ENCODE measurements at regions of chr9 and their contacts with region 1.

Region 1: GRCh38 chr9:105694190-105694847 is at the start of gene TMEM38B:
- DNase-seq: peak; percentile 85 to 93
- ATAC-seq: peak; percentile 96
- H3K4me3 ChIP-seq: peak within 1 kb of the TSS; percentile 61 to 74
- H3K27ac ChIP-seq: peak within 1 kb of the TSS in 1 of 2 donors; percentile 52
- H3K4me1 ChIP-seq: no peaks in the 10 kb centered on the region
- H3K27me3 ChIP-seq: no peaks in the 10 kb centered on the region
- total RNA-seq, gene TMEM38B: 9.8 to 10.5 TPM

Region 2: DNA sequence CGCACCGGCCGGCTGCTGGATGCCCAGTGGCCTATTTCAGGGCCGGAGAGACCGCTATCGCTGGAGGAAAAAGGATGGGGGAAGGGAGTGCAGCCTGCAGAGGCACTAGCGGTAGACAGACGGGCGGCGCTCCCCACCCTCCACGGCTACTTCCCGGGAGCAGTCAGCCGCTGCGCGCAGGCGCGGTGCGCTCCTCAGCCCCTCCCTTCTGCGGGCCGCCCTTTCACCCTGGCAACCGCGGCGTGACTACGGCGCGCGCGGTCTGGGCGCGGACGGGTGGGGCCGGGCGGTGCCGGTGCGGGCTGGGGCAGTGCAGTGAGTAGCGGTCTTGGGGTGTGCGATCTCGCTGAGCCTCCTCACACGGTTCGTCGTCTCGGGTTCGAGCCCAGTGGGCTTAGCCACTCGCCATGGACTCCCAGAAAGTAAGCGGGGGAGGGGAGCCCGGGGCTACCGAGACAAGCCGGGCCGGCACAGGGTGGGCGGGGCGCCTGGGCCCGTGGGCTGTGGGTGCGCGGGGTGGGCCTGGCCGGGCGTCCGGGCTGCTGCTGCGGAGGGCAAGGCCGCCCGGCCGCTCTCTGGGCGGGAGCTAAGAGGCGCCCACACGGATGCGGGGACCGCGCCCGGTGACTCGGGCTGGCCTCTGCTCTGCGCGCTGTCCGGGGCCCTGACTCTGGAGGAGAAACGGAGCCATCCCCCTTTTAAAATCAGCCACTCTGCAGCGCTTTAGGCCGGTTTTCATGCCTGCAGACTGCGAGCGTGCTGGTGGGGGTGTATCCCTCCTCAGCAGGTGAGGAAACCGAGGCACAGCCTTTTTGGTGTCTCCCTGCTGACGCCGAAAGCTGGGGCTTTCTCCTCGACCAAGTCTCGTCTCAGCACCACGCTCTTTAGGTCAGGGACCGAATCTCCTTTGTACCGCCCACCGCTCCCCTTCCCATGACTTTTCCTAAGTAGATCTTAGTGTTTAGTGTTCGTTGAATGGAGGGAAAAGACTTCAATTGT is 246.2 kb before region 1 on chr9 and contains the start of gene FSD1L:
- intact Hi-C with region 1: loop called in 1 of 2 experiments (anchors 10 kb)
- DNase-seq: peak; percentile 97 to 98
- ATAC-seq: peak; percentile 97
- H3K4me3 ChIP-seq: peak within 1 kb of the TSS; percentile 42 to 81
- H3K27ac ChIP-seq: no peak within 1 kb of the TSS
- H3K4me1 ChIP-seq: no peaks in the 10 kb centered on the region
- H3K27me3 ChIP-seq: no peaks in the 10 kb centered on the region
- total RNA-seq, gene FSD1L: 4.6 to 6.9 TPM

Region 3: GRCh38 chr9:105557771-105558610 is 136.3 kb before region 1 on chr9 and contains the start of gene FKTN:
- intact Hi-C with region 1: loop called in 1 of 2 experiments (anchors 5 kb)
- DNase-seq: peak; percentile 92 to 96
- ATAC-seq: peak; percentile 98
- H3K4me3 ChIP-seq: peak within 1 kb of the TSS; percentile 52 to 79
- H3K27ac ChIP-seq: peak within 1 kb of the TSS in 1 of 2 donors; percentile 21
- H3K4me1 ChIP-seq: peaks cover 0 to 4% of the 10 kb centered on the region in 2 donors
- H3K27me3 ChIP-seq: no peaks in the 10 kb centered on the region
- total RNA-seq, gene FKTN: 15.5 to 16.9 TPM